ENCODE measurements at regions of chr3 and their contacts with region 1.

Region 1: DNA sequence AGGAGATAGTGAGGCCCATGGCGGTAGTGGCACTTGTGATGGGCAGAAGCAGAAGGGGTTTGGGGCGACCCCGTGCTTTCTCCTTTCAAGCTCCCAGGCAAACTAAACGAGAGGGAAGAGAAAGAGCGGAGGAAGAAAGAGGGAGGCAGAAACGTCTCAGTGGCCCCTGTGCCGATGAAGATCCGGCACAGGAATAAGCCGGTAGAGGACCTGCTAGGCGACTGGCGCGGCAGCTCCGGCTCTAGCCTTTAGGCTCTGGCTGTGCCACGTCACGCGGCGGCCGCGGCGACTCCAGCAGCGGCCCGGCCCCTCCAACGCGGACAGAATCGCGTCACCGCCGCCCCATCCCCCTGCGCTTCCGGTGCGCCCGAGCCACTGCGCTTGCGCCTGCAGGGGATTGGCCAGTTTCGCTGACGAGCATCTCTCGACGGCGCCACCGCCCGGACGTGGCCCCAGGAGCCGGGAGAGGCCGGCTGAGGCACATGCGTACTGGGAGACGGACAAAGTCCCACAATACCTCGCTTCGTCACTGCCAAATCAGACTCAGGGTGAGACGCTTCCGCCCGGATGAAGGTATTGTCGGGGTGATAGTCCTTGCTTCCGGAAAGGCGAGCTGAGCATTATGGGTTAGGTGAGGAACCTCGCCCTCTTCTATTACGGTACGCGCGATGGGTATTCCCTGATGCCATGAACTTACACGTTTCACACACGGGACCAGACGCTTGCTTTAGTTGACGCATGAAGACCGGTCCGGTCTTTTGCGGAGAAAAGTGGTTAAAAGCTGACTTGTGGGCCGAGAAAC is at the start of gene ARF4:
- DNase-seq: peak; percentile 99
- ATAC-seq: peak; percentile 97
- total RNA-seq, gene ARF4: 66.4 TPM

Region 2: DNA sequence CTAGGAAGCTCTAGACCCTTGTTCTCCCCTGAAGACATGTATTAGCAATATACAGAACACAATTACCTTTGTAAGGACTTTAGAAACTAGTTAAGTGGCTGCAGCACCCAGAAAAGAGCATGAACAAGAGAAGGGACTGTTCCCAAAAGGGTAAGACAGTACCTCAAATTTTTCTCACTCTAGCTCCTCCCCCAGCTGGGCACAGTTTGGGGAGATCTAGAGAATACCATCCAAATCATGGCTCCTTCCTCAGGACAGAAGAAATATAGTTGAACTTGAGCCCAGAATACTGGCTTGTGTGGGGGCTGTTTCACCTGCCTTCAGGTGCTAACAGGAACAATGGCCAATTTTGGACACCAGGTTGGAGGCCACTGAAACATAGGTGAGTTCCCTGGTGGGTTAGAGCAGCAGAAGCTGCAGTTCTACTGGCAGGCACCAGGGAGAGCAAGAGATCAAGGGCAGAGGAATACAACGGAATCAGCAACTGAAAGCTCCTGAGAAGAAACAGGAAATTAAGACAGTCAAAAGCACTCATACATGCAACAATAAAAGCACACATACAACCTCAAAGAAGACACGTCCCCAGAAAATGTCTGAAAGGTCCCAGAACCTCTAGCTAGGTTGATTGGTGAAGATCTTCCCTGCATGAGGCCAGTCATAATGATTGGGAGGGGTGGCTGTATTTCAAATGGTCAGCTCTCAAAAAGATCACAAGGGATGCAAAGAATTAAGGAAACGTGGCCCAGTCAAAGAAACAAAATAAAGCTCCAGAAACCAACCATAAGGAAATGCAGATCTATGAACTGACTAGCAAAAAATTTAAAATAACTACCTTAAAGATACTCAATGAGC is 199.9 kb before region 1 on chr3:
- intact Hi-C with region 1: loop called (anchors 5 kb)
- DNase-seq: no peak
- ATAC-seq: no peak

Region 3: DNA sequence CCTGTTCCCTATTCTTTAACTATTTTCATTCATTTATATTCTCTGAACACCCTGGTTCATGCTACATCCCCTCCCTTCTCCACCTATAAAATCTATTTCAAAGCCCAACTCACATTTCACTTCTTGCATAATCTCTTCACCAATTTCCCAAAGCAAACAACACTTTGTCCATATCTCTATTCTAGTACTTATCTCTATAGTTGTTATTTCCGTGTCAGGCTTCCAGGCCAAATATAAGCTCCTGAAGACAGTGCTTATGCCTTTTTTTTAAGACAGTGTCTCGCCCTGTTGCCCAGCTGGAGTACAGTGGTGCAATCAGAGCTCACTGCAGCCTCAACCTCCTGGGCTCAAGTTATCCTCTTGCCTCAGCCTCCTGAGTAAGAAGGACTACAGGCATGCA is 96.8 kb before region 1 on chr3:
- intact Hi-C with region 1: no loop called
- DNase-seq: no peak
- ATAC-seq: no peak

Region 4: DNA sequence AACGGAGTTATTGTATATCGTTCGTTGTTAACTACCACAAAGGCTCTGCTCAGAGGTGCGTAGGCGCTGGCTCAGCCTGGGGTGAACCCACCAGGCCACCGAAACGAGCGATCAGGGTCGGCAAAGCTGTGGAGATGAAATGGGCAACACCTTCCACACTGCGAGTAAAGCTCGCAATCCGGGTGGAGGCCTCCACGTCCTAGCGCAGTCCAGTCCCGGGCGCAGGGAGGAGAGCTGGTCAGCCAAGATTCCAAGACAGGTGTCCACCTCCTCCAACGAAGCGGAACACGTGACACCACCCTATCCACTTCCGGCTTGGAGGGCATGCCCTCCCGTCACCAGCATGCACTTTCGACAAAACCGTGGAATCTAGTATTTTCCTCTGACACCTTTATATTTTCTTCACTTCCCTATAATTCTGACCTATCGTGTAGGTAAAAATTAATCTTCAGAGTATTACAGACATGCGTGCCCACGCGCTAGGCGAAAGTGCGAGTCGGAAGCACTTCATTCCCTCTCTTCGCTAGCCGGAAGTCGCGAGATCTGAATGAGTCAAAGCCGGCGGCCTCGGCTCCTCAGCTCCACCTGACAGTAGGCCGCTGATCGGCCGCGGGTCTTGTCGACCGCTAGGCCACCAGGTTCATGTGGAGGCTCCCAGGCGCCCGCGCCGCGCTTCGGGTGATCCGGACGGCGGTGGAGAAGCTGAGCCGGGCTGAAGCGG is 41.4 kb before region 1 on chr3 and contains the start of gene PDE12:
- intact Hi-C with region 1: loop called (anchors 2 kb)
- DNase-seq: peak; percentile 94
- ATAC-seq: peak; percentile 95
- total RNA-seq, gene PDE12: 10.3 TPM

Region 5: DNA sequence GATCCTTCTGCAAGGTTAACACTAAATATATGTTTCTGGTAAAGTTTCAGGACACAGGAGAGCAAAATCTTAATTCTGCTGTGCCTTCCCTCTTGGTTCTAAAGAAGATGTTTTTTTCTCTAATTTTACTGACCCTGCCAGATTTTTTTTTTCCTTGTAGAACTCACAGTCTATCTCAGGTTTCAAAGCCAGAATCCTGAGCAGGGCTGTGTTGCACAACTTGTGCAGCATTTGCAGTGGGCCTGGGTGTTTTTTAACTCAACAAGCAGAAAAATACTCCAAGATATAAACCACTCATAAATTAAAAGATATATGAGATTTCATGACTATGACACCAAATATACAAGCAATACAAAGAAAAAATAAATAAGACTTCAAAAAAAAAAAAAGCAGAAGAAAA is 40.1 kb after region 1 on chr3:
- intact Hi-C with region 1: no loop called
- DNase-seq: no peak
- ATAC-seq: no peak

Region 6: GRCh38 chr3:57692259-57693147 is 95.2 kb after region 1 on chr3 and contains the start of gene DENND6A:
- intact Hi-C with region 1: loop called (anchors 1 kb)
- DNase-seq: peak; percentile 92
- ATAC-seq: peak; percentile 97
- total RNA-seq, gene DENND6A: 13.3 TPM

Region 7: DNA sequence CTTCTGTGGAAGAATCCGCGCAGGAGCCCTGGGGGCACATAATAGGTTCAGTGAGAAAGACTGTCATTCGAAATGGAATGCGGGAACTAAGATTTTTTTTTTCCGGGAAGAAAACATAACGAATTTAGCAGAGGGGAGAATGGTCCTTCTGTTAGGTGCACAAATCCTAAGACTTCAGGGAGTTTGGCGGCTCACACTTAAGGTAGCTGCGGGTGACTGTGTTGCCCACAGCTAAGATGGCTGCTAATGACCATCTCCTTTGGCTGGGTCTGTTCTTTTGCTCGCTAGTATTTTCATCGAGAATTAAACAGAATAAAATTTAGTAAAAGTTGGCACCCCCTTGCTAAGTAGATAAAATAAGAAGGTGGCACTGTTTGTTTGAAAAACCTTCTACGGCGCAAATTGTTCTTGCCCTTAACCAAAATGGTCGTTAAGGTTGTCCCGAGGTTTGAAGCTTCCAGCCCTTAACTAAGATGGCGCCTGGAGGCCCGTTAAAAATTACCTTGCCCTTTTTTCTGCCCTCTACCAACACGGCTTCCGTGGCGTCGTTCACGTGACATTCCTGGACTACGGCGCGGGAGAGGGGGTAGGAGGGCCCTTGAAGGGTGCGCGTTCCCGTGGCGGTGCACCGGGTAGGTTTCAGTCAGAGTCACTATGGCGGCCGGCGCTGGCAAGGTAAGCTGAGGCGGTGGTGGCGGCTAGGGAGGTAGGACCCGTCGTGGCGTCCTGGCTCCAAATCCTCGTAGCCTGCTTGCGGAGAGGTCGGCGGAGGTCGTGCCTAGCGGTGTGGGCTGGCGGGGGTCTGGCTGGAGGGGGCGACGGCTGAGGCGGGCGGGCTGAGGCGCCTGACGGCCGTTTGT is 158.6 kb after region 1 on chr3 and contains the start of gene SLMAP:
- intact Hi-C with region 1: loop called (anchors 10 kb)
- DNase-seq: peak; percentile 99
- ATAC-seq: peak; percentile 99
- total RNA-seq, gene SLMAP: 294 TPM

Region 8: GRCh38 chr3:57787867-57788623 is 190.7 kb after region 1 on chr3:
- intact Hi-C with region 1: no loop called
- DNase-seq: no peak
- ATAC-seq: no peak

Measured in Right ventricle myocardium inferior (tissue), 1 donor.